ENCODE measurements at regions of chr12 and their contacts with region 1.

Region 1: DNA sequence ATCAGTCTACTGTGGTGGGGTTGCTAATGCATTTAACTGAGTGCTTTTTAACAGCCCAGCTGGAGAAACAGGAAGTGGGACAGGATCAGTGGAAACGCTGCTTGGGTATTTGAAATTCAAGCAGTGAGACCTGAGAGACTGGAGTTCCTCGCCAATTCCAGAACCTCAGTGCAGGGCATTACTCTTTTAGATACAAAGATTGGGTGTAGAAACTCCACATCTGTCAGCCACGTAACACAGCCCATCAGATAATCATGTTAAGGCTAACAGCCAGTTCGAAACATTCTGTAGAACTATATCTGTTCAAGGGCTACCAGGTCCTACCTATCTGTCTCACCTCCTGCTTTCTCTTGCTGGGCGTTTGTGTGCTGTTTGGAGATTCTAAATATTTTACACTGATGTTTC is 45.5 kb downstream of the RAD52 start:
- DNase-seq: no peak
- H3K4me3 ChIP-seq: no peak overlapping the region
- H3K27ac ChIP-seq: no peak overlapping the region
- H3K4me1 ChIP-seq: no peaks in the 10 kb centered on the region
- H3K27me3 ChIP-seq: no peaks in the 10 kb centered on the region
- CTCF ChIP-seq: no peak

Region 2: DNA sequence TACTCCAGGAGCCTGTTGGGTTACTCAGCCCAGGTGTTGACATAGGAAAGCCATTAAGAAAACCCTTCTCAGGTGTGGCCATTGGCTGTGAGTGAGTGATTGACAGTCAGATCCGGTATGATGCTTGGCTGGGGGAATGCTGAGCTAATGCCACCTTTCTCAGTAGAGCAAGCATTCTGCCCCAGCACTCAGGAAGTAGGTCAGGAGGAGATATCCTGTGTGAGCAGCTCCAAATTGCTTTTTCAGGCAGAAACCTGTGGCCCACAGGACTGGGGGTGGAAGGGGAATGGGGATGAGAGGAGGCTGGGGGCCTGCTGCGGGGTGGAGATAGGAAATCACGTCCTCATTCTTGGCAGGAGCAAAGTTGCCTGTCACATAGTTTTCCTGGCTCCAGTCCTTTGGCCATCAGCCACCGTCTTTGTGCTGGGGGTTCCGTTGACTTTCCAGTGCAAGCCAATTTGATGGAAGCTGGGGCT is 296.4 kb before region 1 on chr12:
- CTCF ChIA-PET with region 1: no interaction called
- POLR2A ChIA-PET with region 1: no interaction called
- intact Hi-C with region 1: no loop called
- DNase-seq: peak; percentile 72 to 90
- H3K4me3 ChIP-seq: no peak overlapping the region
- H3K27ac ChIP-seq: peak overlapping the region; percentile 28
- H3K4me1 ChIP-seq: peaks cover 38% of the 10 kb centered on the region
- H3K27me3 ChIP-seq: no peaks in the 10 kb centered on the region
- CTCF ChIP-seq: no peak

Region 3: DNA sequence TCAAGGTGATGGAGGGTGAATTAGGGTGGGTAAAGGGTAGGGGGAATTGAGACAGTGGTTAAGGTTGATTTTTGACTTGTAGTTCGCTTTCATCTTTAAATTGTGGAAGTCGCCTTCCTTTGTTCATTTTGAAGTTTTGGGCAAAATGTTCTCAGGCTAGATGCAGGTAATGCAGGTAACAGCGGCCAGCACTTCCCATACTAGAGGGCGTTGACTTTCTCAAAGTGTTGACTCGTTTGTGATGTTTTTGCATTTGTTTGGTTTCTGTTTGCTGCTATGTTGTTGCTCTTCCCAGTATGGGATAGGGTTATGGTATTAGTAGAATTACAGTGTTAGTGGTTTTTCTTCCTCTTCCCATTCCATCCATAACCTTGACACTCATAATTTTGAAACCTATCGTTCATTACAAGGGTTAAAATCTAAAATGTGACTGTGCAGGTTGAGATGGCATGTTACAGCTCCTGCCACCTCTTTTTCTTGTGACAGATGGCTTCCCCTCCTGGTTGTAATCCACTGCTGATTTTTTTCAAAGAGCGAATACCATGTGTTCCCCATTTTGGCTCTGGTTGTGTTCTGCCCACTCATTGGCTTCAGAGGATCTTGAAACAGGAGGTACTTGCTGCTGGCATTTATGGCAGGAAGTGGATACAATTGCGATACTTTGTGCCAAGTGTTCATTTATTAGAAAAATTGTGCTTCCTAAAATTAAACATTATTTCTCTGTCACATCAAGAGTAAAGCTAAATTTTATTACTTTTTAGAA is 144.1 kb after region 1 on chr12:
- CTCF ChIA-PET with region 1: no interaction called
- POLR2A ChIA-PET with region 1: interaction called, 23 read pairs
- intact Hi-C with region 1: no loop called
- DNase-seq: no peak
- H3K4me3 ChIP-seq: no peak overlapping the region
- H3K27ac ChIP-seq: no peak overlapping the region
- H3K4me1 ChIP-seq: peaks cover 22% of the 10 kb centered on the region
- H3K27me3 ChIP-seq: no peaks in the 10 kb centered on the region
- CTCF ChIP-seq: no peak

Measured in PC-9 (cell line).